Prostate gland (tissue), 2 donors: ENCODE measurements at regions of chr1 and their contacts with region 1.

Region 1: DNA sequence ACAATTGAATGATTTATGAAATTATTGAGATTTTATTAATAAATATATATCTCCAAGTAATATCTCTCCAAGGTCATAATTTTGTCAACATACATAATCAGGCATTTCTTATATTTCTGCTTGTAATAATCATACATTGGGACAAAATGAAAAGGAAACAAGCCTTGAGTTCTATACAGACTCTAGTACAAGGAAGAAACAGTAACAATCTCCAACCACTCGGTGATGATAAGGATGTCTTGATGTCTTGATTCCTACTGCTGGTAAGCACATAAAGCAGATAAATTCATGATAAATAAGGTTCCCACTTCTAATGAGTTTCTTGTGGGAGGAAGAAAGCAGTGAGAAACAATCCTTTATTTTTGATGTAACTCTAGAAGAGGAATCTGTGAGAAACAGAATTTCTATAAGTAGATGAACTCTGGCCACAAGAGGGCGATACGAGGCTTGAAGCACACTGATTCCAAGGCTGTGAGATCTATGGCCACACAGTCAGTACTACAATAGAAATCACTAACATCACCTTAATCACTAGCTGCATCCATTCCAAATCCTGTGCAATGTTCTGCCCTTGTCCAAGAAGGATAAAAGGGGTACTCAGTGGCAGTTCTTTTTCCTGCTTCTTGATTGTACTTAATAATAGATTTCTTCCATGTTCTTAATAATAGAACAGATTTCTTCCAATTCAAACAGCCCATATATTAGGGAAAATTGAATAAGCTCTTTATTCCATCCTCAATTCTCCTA is 41.4 kb upstream of the LRRC8B start:
- DNase-seq: peak; percentile 81
- H3K4me3 ChIP-seq: no peak overlapping the region
- H3K27ac ChIP-seq: no peak overlapping the region
- H3K4me1 ChIP-seq: no peaks in the 10 kb centered on the region
- H3K27me3 ChIP-seq: no peaks in the 10 kb centered on the region
- CTCF ChIP-seq: peak; percentile 40 to 73 (median 70)
- POLR2A ChIP-seq: no peak

Region 2: GRCh38 chr1:89598450-89599331 is 115.5 kb after region 1 on chr1:
- intact Hi-C with region 1: loop called (anchors 2 kb)
- DNase-seq: no peak
- H3K4me3 ChIP-seq: no peak overlapping the region
- H3K27ac ChIP-seq: no peak overlapping the region
- H3K4me1 ChIP-seq: no peaks in the 10 kb centered on the region
- H3K27me3 ChIP-seq: no peaks in the 10 kb centered on the region
- CTCF ChIP-seq: peak; percentile 25 to 86 (median 76)
- POLR2A ChIP-seq: no peak

Region 3: DNA sequence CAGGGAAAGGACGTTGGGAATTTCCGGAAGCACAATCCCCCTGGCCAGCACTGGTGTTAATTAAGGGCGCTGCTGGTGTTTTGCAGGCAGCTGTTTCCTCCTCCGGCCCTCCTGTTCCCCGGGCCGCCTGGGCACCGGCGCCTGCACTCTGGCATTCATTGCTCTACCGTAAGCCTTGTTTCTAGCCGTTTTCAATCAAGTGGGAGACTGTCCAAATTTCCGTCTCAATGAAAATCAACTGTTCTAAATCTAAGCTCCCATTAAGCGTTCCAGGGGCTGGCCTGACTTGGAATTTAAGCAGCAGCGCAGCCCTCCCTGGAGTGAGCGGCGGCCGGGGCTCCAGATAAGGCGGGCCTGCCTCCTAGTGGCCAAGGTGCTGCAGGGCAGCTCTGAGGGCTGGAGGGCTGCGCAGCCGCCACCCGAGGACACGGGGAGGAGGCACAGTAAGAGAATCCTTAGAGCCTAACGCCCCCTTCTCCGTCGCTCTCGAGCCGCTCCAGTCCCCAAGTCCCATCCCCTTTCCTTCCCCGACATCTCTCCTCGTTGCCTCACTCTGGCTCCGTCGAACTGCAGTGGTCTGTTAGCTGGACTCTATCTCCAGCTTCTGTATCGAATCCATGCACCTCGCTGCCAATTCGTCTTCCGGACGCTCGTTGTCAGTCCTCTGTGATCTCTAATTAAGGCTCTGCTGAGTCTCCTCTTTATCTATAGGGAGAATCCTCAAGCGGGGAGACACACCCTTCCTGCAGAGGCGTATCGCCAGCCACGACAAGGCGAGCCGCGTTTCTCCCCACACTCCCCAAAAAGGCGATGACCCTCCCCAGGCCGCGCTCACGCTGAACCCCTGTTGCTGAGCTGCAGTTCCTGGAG is 279.8 kb after region 1 on chr1:
- intact Hi-C with region 1: loop called (anchors 5 kb)
- DNase-seq: peak; percentile 74
- H3K4me3 ChIP-seq: peak overlapping the region; percentile 22 to 25
- H3K27ac ChIP-seq: peak overlapping the region in 1 of 2 donors; percentile 7
- H3K4me1 ChIP-seq: no peaks in the 10 kb centered on the region
- H3K27me3 ChIP-seq: no peaks in the 10 kb centered on the region
- CTCF ChIP-seq: peak; percentile 68 to 95 (median 84)
- POLR2A ChIP-seq: no peak

Region 4: GRCh38 chr1:90210631-90211491 is 727.7 kb after region 1 on chr1:
- intact Hi-C with region 1: no loop called
- DNase-seq: no peak
- H3K4me3 ChIP-seq: no peak overlapping the region
- H3K27ac ChIP-seq: no peak overlapping the region
- H3K4me1 ChIP-seq: no peaks in the 10 kb centered on the region
- H3K27me3 ChIP-seq: no peaks in the 10 kb centered on the region
- CTCF ChIP-seq: no peak
- POLR2A ChIP-seq: no peak